ENCODE measurements at regions of chr1 and their contacts with region 1.

Region 1: DNA sequence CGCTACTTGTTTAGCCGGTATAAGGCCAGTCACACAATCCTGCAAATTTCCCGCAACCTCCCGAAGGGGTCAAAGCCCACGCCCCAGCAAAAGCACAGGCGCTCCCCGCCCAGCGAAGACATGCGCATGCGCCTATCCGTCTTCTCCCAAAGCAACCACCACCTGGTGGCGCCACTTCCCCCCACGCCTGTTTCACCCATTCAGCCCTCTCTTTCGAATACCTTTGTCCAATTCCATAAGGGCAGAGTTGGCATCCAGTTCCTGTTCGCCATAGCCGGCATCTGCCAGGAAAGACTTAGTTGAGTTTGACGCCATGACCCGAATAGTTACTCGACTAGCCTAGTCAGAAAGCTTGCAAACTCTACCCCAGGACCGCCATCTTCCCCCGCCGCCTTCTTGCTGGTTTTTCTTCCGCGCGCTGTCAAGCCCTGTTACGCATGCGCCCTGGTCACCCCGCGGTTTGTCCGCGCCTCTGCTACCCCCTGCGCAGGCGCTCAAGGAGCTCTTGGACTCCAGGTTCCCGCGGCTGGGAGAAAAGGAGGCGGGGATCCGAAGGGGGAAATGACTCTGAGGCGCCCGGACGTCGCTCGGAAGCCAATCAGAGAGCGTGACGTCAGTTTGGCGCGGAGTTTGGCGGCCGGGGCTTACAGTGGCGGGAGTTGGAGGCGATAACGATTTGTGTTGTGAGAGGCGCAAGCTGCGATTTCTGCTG is at the starts of genes DTL and INTS7:
- DNase-seq: peak; percentile 100
- H3K4me3 ChIP-seq: peak within 1 kb of the TSS; percentile 75
- H3K27ac ChIP-seq: peak within 1 kb of the TSS; percentile 91
- H3K4me1 ChIP-seq: peaks cover 33% of the 10 kb centered on the region
- H3K27me3 ChIP-seq: no peaks in the 10 kb centered on the region
- CTCF ChIP-seq: peak; percentile 99
- total RNA-seq, gene DTL: 78.4 and 84.3 TPM in 2 replicates
- total RNA-seq, gene INTS7: 41.5 and 45.0 TPM in 2 replicates

Region 2: DNA sequence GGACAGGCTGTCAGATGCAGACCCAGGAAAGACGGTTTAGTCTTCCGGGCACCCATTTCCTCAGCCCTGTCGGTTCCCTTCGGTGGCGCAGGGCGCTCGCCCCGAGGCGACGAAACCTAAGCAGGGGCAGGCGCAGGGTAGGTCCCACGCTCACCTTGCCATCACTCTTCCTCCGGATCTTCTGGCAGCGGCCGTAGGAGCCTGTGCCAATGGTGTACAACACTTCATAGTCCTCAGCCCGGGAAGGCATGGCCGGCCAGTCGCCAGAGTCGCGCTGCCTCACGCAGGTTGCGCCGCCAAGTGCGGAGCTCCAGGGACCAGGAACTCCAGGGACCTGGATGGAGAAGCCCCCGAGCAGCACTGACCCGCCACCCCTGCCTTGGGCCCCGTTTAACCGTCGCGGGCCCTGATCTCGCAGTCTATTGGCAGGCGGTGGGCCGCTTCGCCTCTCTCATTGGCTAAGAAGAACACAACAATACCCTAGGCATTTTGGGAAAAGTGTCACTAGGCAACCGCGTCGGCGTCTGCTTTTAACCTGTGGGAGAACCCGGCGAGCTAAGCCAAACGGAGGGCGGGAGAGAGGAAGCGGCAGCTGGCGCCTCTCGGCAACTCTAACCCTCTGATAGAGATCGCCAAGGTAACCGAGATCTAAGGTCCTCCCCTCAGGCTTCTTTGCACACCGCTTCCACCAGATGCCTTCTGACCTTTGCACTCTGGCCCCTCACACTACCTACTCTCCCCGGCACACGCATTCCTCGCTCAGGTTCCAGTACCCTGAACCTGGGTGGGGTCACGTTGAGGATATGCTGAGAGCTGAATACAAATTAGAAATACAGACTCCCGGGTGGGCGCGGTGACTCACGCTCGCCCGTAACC is 359.8 kb before region 1 on chr1 and contains the start of gene NEK2:
- CTCF ChIA-PET with region 1: interaction called, 12 read pairs
- POLR2A ChIA-PET with region 1: interaction called, 3 read pairs
- intact Hi-C with region 1: loop called (anchors 10 kb)
- DNase-seq: peak; percentile 97
- H3K4me3 ChIP-seq: peak within 1 kb of the TSS; percentile 80
- H3K27ac ChIP-seq: peak within 1 kb of the TSS; percentile 61
- H3K4me1 ChIP-seq: peaks cover 14% of the 10 kb centered on the region
- H3K27me3 ChIP-seq: no peaks in the 10 kb centered on the region
- CTCF ChIP-seq: no peak
- total RNA-seq, gene NEK2: 45.7 and 48.8 TPM in 2 replicates

Region 3: GRCh38 chr1:211680752-211681327 is 354.4 kb before region 1 on chr1:
- CTCF ChIA-PET with region 1: interaction called, 12 read pairs
- POLR2A ChIA-PET with region 1: no interaction called
- intact Hi-C with region 1: loop called (anchors 10 kb)
- DNase-seq: peak; percentile 92
- H3K4me3 ChIP-seq: no peak overlapping the region
- H3K27ac ChIP-seq: no peak overlapping the region
- H3K4me1 ChIP-seq: peaks cover 5% of the 10 kb centered on the region
- H3K27me3 ChIP-seq: no peaks in the 10 kb centered on the region
- CTCF ChIP-seq: peak; percentile 77

Measured in A673 (cell line).